IMR-90 (cell line): ENCODE measurements at regions of chr12 and their contacts with region 1.

Region 1: DNA sequence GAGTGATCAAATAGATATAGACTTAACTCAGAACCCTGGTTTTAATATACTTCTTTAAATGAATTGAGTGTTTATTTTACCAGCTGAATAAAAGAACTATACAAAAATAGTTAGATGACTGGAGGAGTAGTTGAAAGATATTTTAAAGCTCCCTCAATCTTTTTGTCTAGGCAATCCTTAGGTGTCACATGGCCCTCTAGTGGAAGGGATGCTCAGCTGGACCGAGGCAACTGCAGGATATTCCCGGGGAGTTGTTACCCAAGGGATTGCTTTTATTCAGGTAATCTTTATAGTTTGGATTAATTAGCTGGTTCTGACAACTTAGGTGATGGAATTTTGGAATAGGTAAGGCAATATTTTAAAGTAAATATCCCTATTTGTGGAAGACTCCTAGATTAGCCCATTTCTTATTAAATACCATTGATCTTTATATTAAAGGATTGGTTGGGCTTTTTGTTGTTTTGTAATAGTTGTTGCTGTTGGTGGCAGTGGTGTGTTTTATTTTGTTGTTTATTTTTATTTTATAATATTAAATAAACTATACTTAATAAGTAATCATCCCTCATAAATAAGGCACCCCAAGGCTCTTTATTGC is 57.1 kb downstream of the ZDHHC17 start:
- DNase-seq: peak; percentile 47
- ATAC-seq: peak; percentile 69
- H3K4me3 ChIP-seq: no peak overlapping the region
- H3K27ac ChIP-seq: no peak overlapping the region
- H3K4me1 ChIP-seq: no peaks in the 10 kb centered on the region; the same call in 1 of the 2 replicates
- H3K27me3 ChIP-seq: no peaks in the 10 kb centered on the region
- CTCF ChIP-seq: peak; percentile 59
- POLR2A ChIP-seq: no peak
- RAD21 ChIP-seq: peak; percentile 49

Region 2: DNA sequence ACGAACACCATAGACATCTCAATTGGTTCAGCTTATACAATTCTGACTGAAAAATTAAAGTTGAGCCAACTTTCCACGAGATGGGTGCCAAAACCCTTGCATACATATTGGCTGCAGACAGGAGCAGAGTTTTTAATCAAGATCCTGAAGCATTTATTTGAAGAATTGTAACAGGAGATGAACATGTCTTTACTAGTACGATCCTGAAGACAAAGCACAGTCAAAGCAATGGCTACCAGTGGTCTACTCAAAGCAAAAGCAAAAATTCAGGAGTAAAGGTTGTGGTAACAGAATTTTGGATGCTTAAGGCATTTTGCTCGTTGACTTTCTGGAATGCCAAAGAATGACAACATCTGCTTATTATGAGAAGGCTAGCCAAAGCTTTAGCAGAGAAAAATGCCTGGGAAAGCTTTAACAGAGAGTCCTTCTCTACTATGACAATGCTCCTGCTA is 36.4 kb before region 1 on chr12:
- CTCF ChIA-PET with region 1: no interaction called
- POLR2A ChIA-PET with region 1: no interaction called
- dilution Hi-C with region 1: no loop called
- in situ Hi-C with region 1: no loop called
- intact Hi-C with region 1: no loop called
- DNase-seq: peak; percentile 77
- ATAC-seq: peak; percentile 75
- H3K4me3 ChIP-seq: no peak overlapping the region
- H3K27ac ChIP-seq: no peak overlapping the region
- H3K4me1 ChIP-seq: peaks cover 7% of the 10 kb centered on the region
- H3K27me3 ChIP-seq: no peaks in the 10 kb centered on the region
- CTCF ChIP-seq: no peak
- POLR2A ChIP-seq: no peak
- RAD21 ChIP-seq: no peak

Region 3: GRCh38 chr12:76810671-76811419 is 10.1 kb before region 1 on chr12:
- CTCF ChIA-PET with region 1: interaction called, 14 read pairs
- POLR2A ChIA-PET with region 1: no interaction called
- dilution Hi-C with region 1: no loop called
- in situ Hi-C with region 1: no loop called
- intact Hi-C with region 1: no loop called
- DNase-seq: no peak
- ATAC-seq: no peak
- H3K4me3 ChIP-seq: no peak overlapping the region
- H3K27ac ChIP-seq: no peak overlapping the region
- H3K4me1 ChIP-seq: no peaks in the 10 kb centered on the region
- H3K27me3 ChIP-seq: no peaks in the 10 kb centered on the region
- CTCF ChIP-seq: no peak
- POLR2A ChIP-seq: no peak
- RAD21 ChIP-seq: no peak

Region 4: DNA sequence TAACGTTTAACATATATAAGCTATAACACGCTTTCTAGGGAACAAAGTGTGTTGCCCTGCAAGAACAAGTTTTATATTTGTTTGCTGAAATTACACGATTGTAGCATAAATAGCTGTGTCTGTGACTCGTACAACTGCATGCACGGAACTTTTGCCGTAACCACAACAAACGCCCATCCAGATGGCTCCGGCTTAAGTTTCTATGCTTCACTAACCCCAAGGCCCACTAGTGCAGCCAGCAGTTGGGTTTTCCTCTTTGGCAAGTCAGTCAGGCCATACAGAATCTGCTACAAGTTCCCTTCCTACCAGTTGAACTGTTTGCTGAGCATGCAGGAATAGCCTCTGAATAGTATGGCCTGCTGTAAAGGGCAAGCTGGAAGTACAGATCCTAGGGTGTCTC is 45.7 kb after region 1 on chr12:
- CTCF ChIA-PET with region 1: no interaction called
- POLR2A ChIA-PET with region 1: no interaction called
- dilution Hi-C with region 1: no loop called
- in situ Hi-C with region 1: no loop called
- intact Hi-C with region 1: no loop called
- DNase-seq: peak; percentile 77
- ATAC-seq: no peak
- H3K4me3 ChIP-seq: no peak overlapping the region
- H3K27ac ChIP-seq: peak overlapping the region; percentile 35; the same call in 1 of the 2 replicates
- H3K4me1 ChIP-seq: peaks cover 17% of the 10 kb centered on the region
- H3K27me3 ChIP-seq: no peaks in the 10 kb centered on the region
- CTCF ChIP-seq: no peak
- POLR2A ChIP-seq: no peak
- RAD21 ChIP-seq: no peak

Region 5: GRCh38 chr12:76920172-76921014 is 99.4 kb after region 1 on chr12:
- CTCF ChIA-PET with region 1: interaction called, 3 read pairs
- POLR2A ChIA-PET with region 1: no interaction called
- dilution Hi-C with region 1: no loop called
- in situ Hi-C with region 1: no loop called
- intact Hi-C with region 1: loop called (anchors 5 kb)
- DNase-seq: no peak
- ATAC-seq: no peak
- H3K4me3 ChIP-seq: no peak overlapping the region
- H3K27ac ChIP-seq: no peak overlapping the region
- H3K4me1 ChIP-seq: peaks cover 4% of the 10 kb centered on the region; the same call in 1 of the 2 replicates
- H3K27me3 ChIP-seq: no peaks in the 10 kb centered on the region
- CTCF ChIP-seq: no peak
- POLR2A ChIP-seq: no peak
- RAD21 ChIP-seq: no peak